ENCODE measurements at regions of chr5 and their contacts with region 1.

Region 1: GRCh38 chr5:40755407-40756365 is at the start of gene TTC33:
- DNase-seq: peak; percentile 98
- H3K4me3 Mint-ChIP-seq: peak within 1 kb of the TSS; percentile 21
- H3K27ac Mint-ChIP-seq: no peak within 1 kb of the TSS
- H3K4me1 Mint-ChIP-seq: peaks cover 17% of the 10 kb centered on the region
- H3K27me3 Mint-ChIP-seq: no peaks in the 10 kb centered on the region
- total RNA-seq, gene TTC33: 30.2 to 34.1 TPM

Region 2: DNA sequence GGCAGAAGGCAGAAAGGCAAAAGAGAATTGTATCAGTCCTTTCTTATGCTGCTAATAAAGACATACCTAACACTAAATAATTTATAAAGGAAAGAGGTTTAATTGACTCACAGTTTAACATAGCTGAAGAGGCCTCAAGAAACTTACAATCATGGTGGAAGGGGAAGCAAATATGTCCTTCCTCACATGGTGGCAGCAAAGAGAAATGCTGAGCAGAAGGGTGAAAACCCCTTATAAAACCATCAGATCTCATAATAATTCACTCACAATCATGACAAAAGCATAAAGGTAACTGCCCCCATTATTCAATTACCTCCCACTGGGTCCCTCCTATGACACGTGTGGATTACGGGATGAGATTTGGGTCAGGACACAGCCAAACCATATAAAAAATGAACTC is 388.4 kb before region 1 on chr5:
- CTCF ChIA-PET with region 1: no interaction called
- POLR2A ChIA-PET with region 1: no interaction called
- intact Hi-C with region 1: no loop called
- DNase-seq: no peak
- H3K4me3 Mint-ChIP-seq: no peak overlapping the region
- H3K27ac Mint-ChIP-seq: no peak overlapping the region
- H3K4me1 Mint-ChIP-seq: peaks cover 14% of the 10 kb centered on the region
- H3K27me3 Mint-ChIP-seq: no peaks in the 10 kb centered on the region

Region 3: DNA sequence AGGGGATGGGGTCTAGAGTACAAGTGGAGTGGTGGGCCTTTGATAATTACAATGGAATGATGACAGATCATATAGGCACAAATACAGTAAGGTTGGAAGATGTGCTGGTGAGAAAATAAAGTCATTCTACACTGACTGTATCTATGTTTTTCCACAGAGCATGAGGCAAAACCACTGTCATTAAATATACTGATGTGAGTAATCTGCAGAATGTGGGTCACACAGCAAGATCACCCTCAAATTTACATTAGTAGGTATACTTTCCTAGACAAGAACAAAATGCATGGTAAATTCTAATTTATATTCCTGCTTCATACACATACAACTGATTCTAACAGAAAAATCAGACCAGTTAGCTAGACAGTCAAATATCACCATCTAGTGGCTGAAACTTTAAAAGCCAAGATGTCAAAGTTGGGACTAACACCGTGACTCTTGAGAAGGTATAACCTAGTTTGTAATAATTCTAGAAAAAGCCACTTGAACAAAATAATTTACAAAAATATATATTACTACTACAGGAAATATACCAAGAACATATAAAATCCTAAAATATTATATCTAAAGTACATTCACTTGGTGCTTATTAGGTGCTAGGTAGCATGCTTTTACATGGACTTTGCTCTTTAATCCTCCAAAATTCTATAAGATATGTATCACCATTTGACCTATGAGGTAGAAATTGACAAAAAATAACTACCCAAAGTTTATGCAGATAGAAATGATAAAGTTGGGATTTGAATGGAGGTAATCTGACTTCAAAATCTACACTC is 19.4 kb before region 1 on chr5:
- CTCF ChIA-PET with region 1: no interaction called
- POLR2A ChIA-PET with region 1: no interaction called
- intact Hi-C with region 1: no loop called
- DNase-seq: no peak
- H3K4me3 Mint-ChIP-seq: no peak overlapping the region
- H3K27ac Mint-ChIP-seq: no peak overlapping the region
- H3K4me1 Mint-ChIP-seq: peaks cover 23% of the 10 kb centered on the region
- H3K27me3 Mint-ChIP-seq: no peaks in the 10 kb centered on the region

Region 4: GRCh38 chr5:40775846-40776657 is 20.4 kb after region 1 on chr5:
- CTCF ChIA-PET with region 1: interaction called, 5 read pairs
- POLR2A ChIA-PET with region 1: interaction called, 3 read pairs
- intact Hi-C with region 1: loop called (anchors 1 kb)
- DNase-seq: no peak
- H3K4me3 Mint-ChIP-seq: no peak overlapping the region
- H3K27ac Mint-ChIP-seq: peak overlapping the region; percentile 80
- H3K4me1 Mint-ChIP-seq: peaks cover 29% of the 10 kb centered on the region
- H3K27me3 Mint-ChIP-seq: no peaks in the 10 kb centered on the region

Region 5: GRCh38 chr5:40787986-40788385 is 32.3 kb after region 1 on chr5:
- CTCF ChIA-PET with region 1: no interaction called
- POLR2A ChIA-PET with region 1: no interaction called
- intact Hi-C with region 1: no loop called
- DNase-seq: no peak
- H3K4me3 Mint-ChIP-seq: no peak overlapping the region
- H3K27ac Mint-ChIP-seq: no peak overlapping the region
- H3K4me1 Mint-ChIP-seq: peaks cover 44% of the 10 kb centered on the region
- H3K27me3 Mint-ChIP-seq: no peaks in the 10 kb centered on the region

Measured in activated CD4-positive, alpha-beta memory T cell treated with anti-CD3 and anti-CD28 coated beads for 36 hours (primary cell).